ENCODE measurements at regions of chr10 and their contacts with region 1.

Region 1: GRCh38 chr10:490891-491581 is 198.4 kb downstream of the DIP2C start:
- DNase-seq: peak; percentile 78 to 85 (median 84)
- ATAC-seq: peak; percentile 79 to 86
- H3K4me3 ChIP-seq: no peak overlapping the region
- H3K27ac ChIP-seq: peak overlapping the region; percentile 37
- H3K4me1 ChIP-seq: peaks cover 8% of the 10 kb centered on the region
- H3K27me3 ChIP-seq: no peaks in the 10 kb centered on the region

Region 2: GRCh38 chr10:173741-174140 is 317.3 kb before region 1 on chr10:
- intact Hi-C with region 1: no loop called
- DNase-seq: no peak
- ATAC-seq: no peak
- H3K4me3 ChIP-seq: no peak overlapping the region
- H3K27ac ChIP-seq: no peak overlapping the region
- H3K4me1 ChIP-seq: no peaks in the 10 kb centered on the region
- H3K27me3 ChIP-seq: no peaks in the 10 kb centered on the region

Region 3: DNA sequence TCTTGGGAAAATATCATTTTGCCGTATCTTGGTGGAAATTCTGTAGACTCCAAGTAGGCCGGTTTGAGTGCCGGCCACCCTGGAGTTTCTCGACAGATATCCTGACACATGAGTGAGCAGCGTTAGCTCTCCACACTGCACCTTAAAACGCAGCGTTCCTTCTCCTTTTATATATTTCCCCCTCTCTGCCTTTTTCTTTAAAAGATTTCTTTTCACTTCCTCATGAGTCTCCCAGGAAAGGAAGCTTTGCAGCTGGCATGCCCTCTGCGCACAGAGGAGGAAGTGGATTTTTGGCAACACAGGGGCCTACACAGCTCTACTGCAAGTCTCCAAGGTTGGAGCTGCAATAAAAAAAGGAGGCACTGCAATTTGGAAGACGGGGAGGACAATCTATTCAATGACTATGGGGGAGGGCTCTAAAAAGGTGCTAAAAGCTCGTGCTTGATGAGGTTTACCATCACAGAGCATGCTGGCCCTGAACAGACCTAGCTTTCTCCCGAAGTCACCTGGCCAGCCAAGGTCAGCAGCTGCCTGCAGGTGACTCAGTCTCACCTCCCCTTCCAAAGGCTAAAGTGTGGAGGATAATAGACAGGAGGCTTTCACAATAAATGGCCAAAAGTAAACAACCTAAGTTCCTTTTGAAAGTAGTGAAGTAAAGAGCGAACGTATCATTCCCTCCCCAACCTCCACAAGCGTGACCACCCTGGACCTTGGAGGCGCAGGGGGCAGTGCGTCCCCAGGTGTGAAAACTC is 103.0 kb before region 1 on chr10:
- intact Hi-C with region 1: no loop called
- DNase-seq: peak in 1 of 3 donors; percentile 72
- ATAC-seq: no peak
- H3K4me3 ChIP-seq: no peak overlapping the region
- H3K27ac ChIP-seq: no peak overlapping the region
- H3K4me1 ChIP-seq: no peaks in the 10 kb centered on the region
- H3K27me3 ChIP-seq: no peaks in the 10 kb centered on the region

Region 4: DNA sequence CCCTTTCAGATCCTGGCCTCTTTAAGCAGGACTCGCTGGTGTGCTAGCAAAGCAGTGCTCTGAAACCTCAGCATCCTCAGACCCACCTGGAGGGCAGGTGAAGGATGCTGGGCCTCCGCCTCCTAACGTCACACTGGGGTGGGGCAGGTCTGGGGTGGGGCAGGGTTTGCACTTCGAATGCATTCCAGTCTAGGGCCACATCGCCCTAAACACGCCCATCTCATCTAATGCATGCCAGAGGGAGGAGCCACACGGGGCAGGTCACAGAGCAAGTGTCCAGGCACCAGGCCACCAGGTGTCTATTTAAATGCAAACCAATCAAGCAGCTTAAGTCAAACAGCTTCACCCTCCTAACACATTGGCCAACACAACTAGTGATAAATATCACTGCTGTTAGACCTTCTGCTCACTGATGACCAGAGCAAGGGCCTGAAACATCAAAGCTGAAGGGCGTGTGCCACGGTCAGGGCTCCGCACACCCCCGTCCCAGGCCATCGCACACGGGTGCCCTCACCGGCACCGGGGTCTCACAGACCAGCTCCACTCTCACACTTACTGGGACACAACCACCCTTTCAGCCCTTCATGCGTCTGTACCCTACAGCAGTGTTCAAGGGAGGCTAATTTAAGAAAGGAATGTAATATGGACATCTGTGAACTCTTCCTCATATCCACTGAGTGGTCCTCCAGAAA is 151.3 kb after region 1 on chr10:
- intact Hi-C with region 1: no loop called
- DNase-seq: peak in 1 of 3 donors; percentile 18
- ATAC-seq: peak; percentile 27 to 30
- H3K4me3 ChIP-seq: no peak overlapping the region
- H3K27ac ChIP-seq: no peak overlapping the region
- H3K4me1 ChIP-seq: no peaks in the 10 kb centered on the region
- H3K27me3 ChIP-seq: no peaks in the 10 kb centered on the region

Region 5: DNA sequence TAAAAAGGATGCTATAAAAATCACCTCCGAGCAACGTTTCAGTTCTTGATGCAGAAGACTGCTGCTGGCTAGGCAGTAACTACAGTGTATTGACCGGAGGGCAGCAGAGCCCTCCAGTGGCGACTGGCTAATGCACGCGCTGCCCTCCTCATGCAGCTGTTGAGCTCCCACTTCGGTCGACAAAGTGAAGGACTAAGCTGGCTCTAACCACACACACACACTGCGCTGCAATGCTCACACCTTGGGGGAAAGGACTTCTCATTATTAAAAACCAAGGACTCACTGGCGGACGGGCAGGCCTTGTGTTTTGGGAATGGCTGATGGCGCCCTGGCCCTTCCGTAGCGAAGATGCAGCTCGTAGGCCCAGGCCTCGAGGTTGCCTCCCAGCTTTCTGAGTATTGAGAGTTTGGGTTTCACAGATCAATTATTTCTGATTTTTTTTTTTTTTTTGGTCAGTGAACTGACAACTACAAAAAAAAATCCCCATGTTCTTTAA is 319.4 kb after region 1 on chr10:
- intact Hi-C with region 1: loop called in 1 of 4 experiments (anchors 10 kb)
- DNase-seq: no peak
- ATAC-seq: peak in 1 of 2 donors; percentile 46
- H3K4me3 ChIP-seq: no peak overlapping the region
- H3K27ac ChIP-seq: no peak overlapping the region
- H3K4me1 ChIP-seq: no peaks in the 10 kb centered on the region
- H3K27me3 ChIP-seq: no peaks in the 10 kb centered on the region